CD8-positive, alpha-beta T cell (primary cell): ENCODE measurements at regions of chr6 and their contacts with region 1.

Region 1: GRCh38 chr6:78253618-78254017 is 600.8 kb downstream of the MEI4 start:
- DNase-seq: no peak
- ATAC-seq: no peak
- H3K4me3 ChIP-seq: no peak overlapping the region
- H3K4me3 Mint-ChIP-seq: no peak overlapping the region
- H3K27ac ChIP-seq: no peak overlapping the region
- H3K27ac Mint-ChIP-seq: no peak overlapping the region
- H3K4me1 ChIP-seq: no peaks in the 10 kb centered on the region
- H3K4me1 Mint-ChIP-seq: no peaks in the 10 kb centered on the region
- H3K27me3 ChIP-seq: no peaks in the 10 kb centered on the region
- H3K27me3 Mint-ChIP-seq: no peaks in the 10 kb centered on the region
- CTCF ChIP-seq: no peak

Region 2: GRCh38 chr6:76422511-76423213 is 1831.0 kb before region 1 on chr6:
- CTCF ChIA-PET with region 1: no interaction called
- POLR2A ChIA-PET with region 1: no interaction called
- intact Hi-C with region 1: no loop called
- DNase-seq: no peak
- ATAC-seq: no peak
- H3K4me3 ChIP-seq: no peak overlapping the region
- H3K4me3 Mint-ChIP-seq: no peak overlapping the region
- H3K27ac ChIP-seq: no peak overlapping the region
- H3K27ac Mint-ChIP-seq: no peak overlapping the region
- H3K4me1 ChIP-seq: no peaks in the 10 kb centered on the region
- H3K4me1 Mint-ChIP-seq: no peaks in the 10 kb centered on the region
- H3K27me3 ChIP-seq: no peaks in the 10 kb centered on the region
- H3K27me3 Mint-ChIP-seq: no peaks in the 10 kb centered on the region
- CTCF ChIP-seq: no peak

Region 3: GRCh38 chr6:78324213-78324612 is 70.6 kb after region 1 on chr6:
- CTCF ChIA-PET with region 1: no interaction called
- POLR2A ChIA-PET with region 1: no interaction called
- intact Hi-C with region 1: loop called in 1 of 2 experiments (anchors 1 kb)
- DNase-seq: no peak
- ATAC-seq: no peak
- H3K4me3 ChIP-seq: no peak overlapping the region
- H3K4me3 Mint-ChIP-seq: no peak overlapping the region
- H3K27ac ChIP-seq: no peak overlapping the region
- H3K27ac Mint-ChIP-seq: no peak overlapping the region
- H3K4me1 ChIP-seq: no peaks in the 10 kb centered on the region
- H3K4me1 Mint-ChIP-seq: no peaks in the 10 kb centered on the region
- H3K27me3 ChIP-seq: no peaks in the 10 kb centered on the region
- H3K27me3 Mint-ChIP-seq: no peaks in the 10 kb centered on the region
- CTCF ChIP-seq: no peak